Dendritic cell treated with granulocyte-macrophage colony-stimulating factor and Interleukin-4, amounts not matched to agents 40 ng/mL and 50 ng/mL, for 4 days (primary cell): ENCODE measurements at regions of chr3 and their contacts with region 1.

Region 1: GRCh38 chr3:188683032-188683521 is 488.7 kb upstream of the TPRG1 start:
- H3K4me3 Mint-ChIP-seq: no peak overlapping the region
- H3K27ac Mint-ChIP-seq: peak overlapping the region; percentile 76
- H3K4me1 Mint-ChIP-seq: peaks cover 59% of the 10 kb centered on the region
- H3K27me3 Mint-ChIP-seq: no peaks in the 10 kb centered on the region

Region 2: GRCh38 chr3:188701485-188701969 is 18.4 kb after region 1 on chr3:
- intact Hi-C with region 1: loop called (anchors 2 kb)
- H3K4me3 Mint-ChIP-seq: peak overlapping the region; percentile 68
- H3K27ac Mint-ChIP-seq: peak overlapping the region; percentile 86
- H3K4me1 Mint-ChIP-seq: peaks cover 55% of the 10 kb centered on the region
- H3K27me3 Mint-ChIP-seq: no peaks in the 10 kb centered on the region

Region 3: GRCh38 chr3:188769831-188770230 is 86.8 kb after region 1 on chr3:
- intact Hi-C with region 1: no loop called
- H3K4me3 Mint-ChIP-seq: no peak overlapping the region
- H3K27ac Mint-ChIP-seq: no peak overlapping the region
- H3K4me1 Mint-ChIP-seq: peaks cover 18% of the 10 kb centered on the region
- H3K27me3 Mint-ChIP-seq: no peaks in the 10 kb centered on the region